CD14-positive monocyte (primary cell): ENCODE measurements at regions of chr3 and their contacts with region 1.

Region 1: DNA sequence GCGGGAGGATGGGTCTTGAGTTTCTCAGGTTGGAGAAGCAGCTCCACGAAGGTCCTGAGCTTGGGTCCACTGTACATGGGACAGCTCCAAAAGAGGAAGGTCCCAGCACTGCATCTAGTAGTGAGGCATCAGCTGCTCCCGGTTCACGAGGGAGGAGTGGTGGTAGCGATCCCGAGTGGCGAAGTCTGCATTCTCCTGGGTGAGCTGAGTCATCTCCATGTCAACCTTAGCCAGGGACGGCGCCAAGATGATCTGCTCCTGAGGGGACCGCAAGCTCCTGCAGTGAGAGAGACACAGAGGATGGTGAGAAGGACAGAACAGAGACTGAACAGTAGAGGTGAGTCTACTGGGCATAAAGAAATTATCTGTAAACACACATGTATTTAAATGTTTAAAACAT is 28.0 kb upstream of the HEG1 start:
- DNase-seq: no peak
- H3K4me3 ChIP-seq: no peak overlapping the region
- H3K4me3 Mint-ChIP-seq: no peak overlapping the region
- H3K27ac ChIP-seq: no peak overlapping the region
- H3K27ac Mint-ChIP-seq: no peak overlapping the region
- H3K4me1 ChIP-seq: peaks cover 5 to 8% of the 10 kb centered on the region in 2 donors
- H3K4me1 Mint-ChIP-seq: peaks cover 9% of the 10 kb centered on the region
- H3K27me3 ChIP-seq: peaks cover 0 to 2% of the 10 kb centered on the region in 2 donors
- H3K27me3 Mint-ChIP-seq: peaks cover 6 to 8% (median 7%) of the 10 kb centered on the region in 3 donors
- CTCF ChIP-seq: no peak

Region 2: GRCh38 chr3:125107861-125108567 is 24.2 kb after region 1 on chr3:
- intact Hi-C with region 1: no loop called
- DNase-seq: peak in 1 of 3 donors; percentile 10
- H3K4me3 ChIP-seq: no peak overlapping the region
- H3K4me3 Mint-ChIP-seq: no peak overlapping the region
- H3K27ac ChIP-seq: no peak overlapping the region
- H3K27ac Mint-ChIP-seq: peak overlapping the region in 2 of 7 donors; percentile 4 to 51
- H3K4me1 ChIP-seq: peaks cover 5 to 17% of the 10 kb centered on the region in 2 donors
- H3K4me1 Mint-ChIP-seq: peaks cover 19% of the 10 kb centered on the region
- H3K27me3 ChIP-seq: no peaks in the 10 kb centered on the region
- H3K27me3 Mint-ChIP-seq: peaks cover 2 to 5% (median 3%) of the 10 kb centered on the region in 3 donors
- CTCF ChIP-seq: no peak

Region 3: GRCh38 chr3:125141596-125142419 is 58.0 kb after region 1 on chr3:
- intact Hi-C with region 1: no loop called
- DNase-seq: peak; percentile 63 to 72 (median 68)
- H3K4me3 ChIP-seq: peak overlapping the region; percentile 4 to 72 (median 16)
- H3K4me3 Mint-ChIP-seq: peak overlapping the region; percentile 78 to 87
- H3K27ac ChIP-seq: peak overlapping the region; percentile 30 to 80
- H3K27ac Mint-ChIP-seq: peak overlapping the region; percentile 70 to 90 (median 79)
- H3K4me1 ChIP-seq: peaks cover 58 to 60% of the 10 kb centered on the region in 2 donors
- H3K4me1 Mint-ChIP-seq: peaks cover 58% of the 10 kb centered on the region
- H3K27me3 ChIP-seq: no peaks in the 10 kb centered on the region
- H3K27me3 Mint-ChIP-seq: peaks cover 0 to 4% (median 2%) of the 10 kb centered on the region in 3 donors
- CTCF ChIP-seq: peak; percentile 7

Region 4: GRCh38 chr3:125386811-125387210 is 303.0 kb after region 1 on chr3:
- intact Hi-C with region 1: loop called in 1 of 2 experiments (anchors 5 kb)
- DNase-seq: no peak
- H3K4me3 ChIP-seq: no peak overlapping the region
- H3K4me3 Mint-ChIP-seq: no peak overlapping the region
- H3K27ac ChIP-seq: no peak overlapping the region
- H3K27ac Mint-ChIP-seq: no peak overlapping the region
- H3K4me1 ChIP-seq: peaks cover 0 to 6% of the 10 kb centered on the region in 2 donors
- H3K4me1 Mint-ChIP-seq: peaks cover 15% of the 10 kb centered on the region
- H3K27me3 ChIP-seq: no peaks in the 10 kb centered on the region
- H3K27me3 Mint-ChIP-seq: peaks cover 0 to 3% (median 3%) of the 10 kb centered on the region in 3 donors
- CTCF ChIP-seq: no peak